ENCODE measurements at regions of chr15 and their contacts with region 1.

Region 1: DNA sequence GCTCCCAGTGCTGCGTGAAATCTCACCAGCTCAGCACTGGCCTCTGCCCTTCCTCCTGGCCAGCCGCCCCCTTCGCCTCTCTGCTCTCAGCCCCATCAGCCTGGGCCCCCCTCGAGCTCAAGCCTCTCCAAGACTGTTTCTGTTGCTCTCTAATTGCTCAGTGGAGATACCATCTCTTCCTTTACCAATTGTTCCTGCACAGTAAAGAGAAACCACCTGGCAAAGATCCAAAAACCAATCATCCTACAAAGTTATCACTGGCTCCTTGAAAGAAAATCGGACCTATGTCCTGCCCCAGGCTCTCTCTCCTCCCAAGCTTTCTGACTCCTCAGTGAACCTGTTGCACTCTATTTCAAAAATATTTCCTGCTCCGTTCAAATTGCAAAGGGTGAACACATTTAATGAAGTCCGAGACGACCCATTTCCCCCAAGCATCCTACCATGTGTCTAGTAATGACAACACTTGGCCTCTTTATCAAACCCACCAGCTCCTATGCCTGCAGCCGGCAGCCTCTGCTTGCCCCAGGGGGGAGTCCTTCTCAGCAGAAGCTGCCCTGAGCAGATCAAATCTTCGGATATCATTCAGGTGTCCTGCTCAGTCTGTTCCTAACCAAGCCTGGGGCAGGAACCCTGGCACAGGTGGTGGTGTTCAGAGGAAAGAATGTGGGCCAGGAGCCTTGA is 53.7 kb upstream of the FAM174B start:
- DNase-seq: no peak
- ATAC-seq: no peak
- H3K4me3 ChIP-seq: no peak overlapping the region
- H3K27ac ChIP-seq: no peak overlapping the region
- H3K4me1 ChIP-seq: peaks cover 3% of the 10 kb centered on the region
- H3K27me3 ChIP-seq: no peaks in the 10 kb centered on the region
- CTCF ChIP-seq: no peak

Region 2: GRCh38 chr15:92385096-92385495 is 324.2 kb before region 1 on chr15:
- intact Hi-C with region 1: loop called (anchors 5 kb)
- DNase-seq: no peak
- ATAC-seq: no peak
- H3K4me3 ChIP-seq: no peak overlapping the region
- H3K27ac ChIP-seq: no peak overlapping the region
- H3K4me1 ChIP-seq: no peaks in the 10 kb centered on the region
- H3K27me3 ChIP-seq: peaks cover 23% of the 10 kb centered on the region
- CTCF ChIP-seq: no peak